ENCODE measurements at regions of chr19 and their contacts with region 1.

Region 1: DNA sequence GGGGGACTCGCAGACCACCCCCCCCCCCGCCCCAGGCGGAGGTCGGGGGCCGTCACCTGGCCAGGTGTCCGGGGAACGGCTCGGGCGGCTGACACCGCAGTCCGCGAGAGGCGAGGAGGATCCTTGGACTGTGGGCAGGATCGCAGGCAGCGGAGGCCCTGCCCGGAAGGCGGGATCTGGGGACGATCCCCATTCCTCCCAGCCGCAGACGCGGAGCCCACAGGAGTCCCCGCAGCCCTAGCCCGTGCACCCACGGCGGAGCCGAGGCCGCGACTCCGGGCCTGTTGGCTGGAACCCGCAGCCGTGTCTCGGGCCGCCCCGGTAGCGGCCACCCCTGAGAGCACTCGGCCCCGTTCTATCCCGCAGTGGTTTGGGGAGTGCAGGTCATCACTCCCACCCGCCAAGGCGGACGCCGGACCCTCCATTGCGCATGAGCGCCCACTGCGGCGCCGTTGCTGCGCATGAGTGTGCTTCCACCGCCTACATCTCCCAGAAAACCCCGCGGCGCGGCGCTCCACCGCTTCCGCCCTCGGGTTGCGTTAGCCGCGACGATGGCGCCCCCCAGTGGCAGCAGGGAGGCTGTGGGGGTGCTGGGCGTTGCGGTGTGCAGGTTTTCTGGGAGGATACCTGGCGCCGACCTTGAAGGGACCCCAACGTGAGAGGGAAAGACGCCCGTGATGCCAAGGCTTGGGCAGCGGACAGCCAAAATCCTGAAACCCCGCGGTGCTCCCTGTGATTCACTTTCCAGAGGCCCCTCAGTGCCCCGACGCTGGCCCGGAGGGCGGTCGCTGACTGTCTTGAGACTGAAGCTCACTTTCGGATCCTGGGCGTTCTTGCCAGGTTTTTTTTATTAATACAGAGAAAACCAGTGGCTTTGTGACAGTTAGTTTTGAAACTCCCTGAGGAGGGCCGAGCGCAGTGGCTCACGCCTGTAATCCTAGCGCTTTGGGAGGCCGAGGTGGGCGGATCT is 4.4 kb upstream of the ZNF329 start:
- DNase-seq: peak; percentile 92 to 97
- H3K4me3 ChIP-seq: peak overlapping the region; percentile 80 to 83
- H3K27ac ChIP-seq: peak overlapping the region; percentile 91 to 95
- H3K4me1 ChIP-seq: peaks cover 0 to 45% (median 28%) of the 10 kb centered on the region in 4 donors
- H3K27me3 ChIP-seq: no peaks in the 10 kb centered on the region
- CTCF ChIP-seq: peak; percentile 97 to 99

Region 2: GRCh38 chr19:57578487-57579205 is 576.3 kb before region 1 on chr19 and contains the start of gene ZNF416:
- intact Hi-C with region 1: loop called (anchors 10 kb)
- DNase-seq: peak; percentile 97 to 98
- H3K4me3 ChIP-seq: peak within 1 kb of the TSS; percentile 72 to 73
- H3K27ac ChIP-seq: peak within 1 kb of the TSS; percentile 65 to 67
- H3K4me1 ChIP-seq: peaks cover 0 to 19% (median 13%) of the 10 kb centered on the region in 4 donors
- H3K27me3 ChIP-seq: no peaks in the 10 kb centered on the region
- CTCF ChIP-seq: no peak

Region 3: GRCh38 chr19:58021541-58022282 is 133.3 kb before region 1 on chr19:
- intact Hi-C with region 1: loop called (anchors 1 kb)
- DNase-seq: peak in 1 of 2 donors; percentile 50
- H3K4me3 ChIP-seq: no peak overlapping the region
- H3K27ac ChIP-seq: no peak overlapping the region
- H3K4me1 ChIP-seq: no peaks in the 10 kb centered on the region
- H3K27me3 ChIP-seq: peaks cover 0 to 3% of the 10 kb centered on the region in 2 donors
- CTCF ChIP-seq: peak; percentile 60 to 75

Region 4: DNA sequence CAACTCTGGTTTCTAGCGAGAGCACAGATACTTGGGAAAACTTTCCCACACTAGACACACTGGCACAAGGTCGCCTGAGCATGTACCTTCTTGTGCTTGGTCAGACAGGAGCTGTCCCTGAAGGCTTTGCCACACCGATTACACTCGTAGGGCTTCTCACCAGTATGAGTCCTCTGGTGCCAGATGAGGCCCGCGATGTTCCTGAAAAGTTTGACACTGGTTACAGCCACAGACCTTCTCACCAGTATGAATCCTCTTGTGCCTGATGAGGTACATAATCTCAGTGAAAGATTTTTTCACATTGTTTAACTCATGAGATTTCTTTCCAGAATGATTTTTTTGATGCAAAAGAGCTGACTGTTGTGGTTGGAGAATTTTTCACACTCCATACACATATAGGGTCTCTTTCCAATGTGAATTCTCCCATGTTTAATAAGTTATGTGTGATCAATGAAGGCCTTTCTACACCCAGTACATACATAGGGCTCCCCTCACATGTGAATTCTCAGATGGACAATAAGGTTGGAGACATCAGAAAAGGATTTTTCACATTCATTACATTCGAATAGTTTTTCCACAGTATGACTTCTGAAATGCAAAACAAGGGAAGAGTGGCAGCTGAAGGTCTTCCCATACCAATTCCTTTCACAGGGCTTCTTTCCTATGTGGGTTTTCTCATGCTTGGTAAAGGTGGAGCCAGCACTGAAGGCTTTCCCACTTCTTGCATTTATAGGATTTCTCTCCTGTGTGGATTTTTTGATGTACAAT is 47.0 kb before region 1 on chr19:
- intact Hi-C with region 1: no loop called
- DNase-seq: no peak
- H3K4me3 ChIP-seq: no peak overlapping the region
- H3K27ac ChIP-seq: no peak overlapping the region
- H3K4me1 ChIP-seq: no peaks in the 10 kb centered on the region
- H3K27me3 ChIP-seq: no peaks in the 10 kb centered on the region
- CTCF ChIP-seq: no peak

Measured in tibial artery (tissue), 4 donors.